CD4-positive, alpha-beta T cell (primary cell): ENCODE measurements at regions of chr2 and their contacts with region 1.

Region 1: DNA sequence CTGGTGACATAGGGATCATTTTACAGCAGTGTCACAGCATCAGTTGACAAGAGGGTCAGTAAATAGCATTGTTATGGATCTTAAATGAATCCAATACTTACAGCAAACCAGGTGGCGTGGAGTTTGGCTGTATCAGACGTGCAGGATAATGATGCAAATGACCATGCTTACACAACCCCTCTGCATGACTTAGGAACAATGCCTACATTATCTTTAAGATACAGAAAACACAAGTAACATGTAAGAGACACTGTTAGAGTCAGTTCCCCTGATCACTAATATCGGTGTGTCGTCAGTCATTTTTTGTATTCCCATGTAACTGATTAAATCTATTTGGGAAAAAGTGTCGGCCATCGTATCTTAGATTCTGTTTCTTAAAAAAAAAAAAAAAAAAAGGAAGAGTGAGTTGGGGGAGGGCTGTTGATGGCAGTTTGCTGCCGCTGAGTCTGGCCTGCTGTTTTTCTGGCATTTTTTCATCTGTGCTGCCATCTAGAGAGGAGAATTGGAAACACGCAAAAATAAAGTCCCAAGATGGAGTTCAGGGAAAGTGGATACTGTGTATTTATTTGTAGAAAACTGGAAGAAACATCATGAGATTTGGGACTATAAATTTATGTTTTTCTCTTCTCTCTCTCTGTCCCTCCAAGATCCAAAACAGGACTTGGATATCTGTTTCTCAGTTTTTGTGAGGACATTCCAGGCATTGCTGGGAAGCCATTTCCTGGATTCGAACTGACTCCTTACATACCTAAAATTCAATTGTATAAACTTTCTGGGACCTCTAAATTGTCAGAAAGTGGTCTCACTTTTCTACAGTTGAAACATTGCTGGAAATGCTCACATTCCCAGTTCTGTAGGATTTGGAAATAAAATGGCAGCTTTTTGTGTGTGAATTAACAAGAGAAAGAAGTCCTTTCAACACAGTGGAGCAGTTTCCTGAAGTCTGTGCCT is 60.3 kb upstream of the AGPS start:
- DNase-seq: peak in 12 of 14 experiments; percentile 9 to 81 (median 22)
- ATAC-seq: peak; percentile 88
- H3K4me3 ChIP-seq: no peak overlapping the region
- H3K4me3 Mint-ChIP-seq: peak overlapping the region; percentile 1
- H3K27ac ChIP-seq: no peak overlapping the region
- H3K27ac Mint-ChIP-seq: no peak overlapping the region
- H3K4me1 ChIP-seq: peaks cover 7% of the 10 kb centered on the region
- H3K4me1 Mint-ChIP-seq: peaks cover 10% of the 10 kb centered on the region
- H3K27me3 ChIP-seq: no peaks in the 10 kb centered on the region
- H3K27me3 Mint-ChIP-seq: no peaks in the 10 kb centered on the region
- CTCF ChIP-seq: peak; percentile 72

Region 2: DNA sequence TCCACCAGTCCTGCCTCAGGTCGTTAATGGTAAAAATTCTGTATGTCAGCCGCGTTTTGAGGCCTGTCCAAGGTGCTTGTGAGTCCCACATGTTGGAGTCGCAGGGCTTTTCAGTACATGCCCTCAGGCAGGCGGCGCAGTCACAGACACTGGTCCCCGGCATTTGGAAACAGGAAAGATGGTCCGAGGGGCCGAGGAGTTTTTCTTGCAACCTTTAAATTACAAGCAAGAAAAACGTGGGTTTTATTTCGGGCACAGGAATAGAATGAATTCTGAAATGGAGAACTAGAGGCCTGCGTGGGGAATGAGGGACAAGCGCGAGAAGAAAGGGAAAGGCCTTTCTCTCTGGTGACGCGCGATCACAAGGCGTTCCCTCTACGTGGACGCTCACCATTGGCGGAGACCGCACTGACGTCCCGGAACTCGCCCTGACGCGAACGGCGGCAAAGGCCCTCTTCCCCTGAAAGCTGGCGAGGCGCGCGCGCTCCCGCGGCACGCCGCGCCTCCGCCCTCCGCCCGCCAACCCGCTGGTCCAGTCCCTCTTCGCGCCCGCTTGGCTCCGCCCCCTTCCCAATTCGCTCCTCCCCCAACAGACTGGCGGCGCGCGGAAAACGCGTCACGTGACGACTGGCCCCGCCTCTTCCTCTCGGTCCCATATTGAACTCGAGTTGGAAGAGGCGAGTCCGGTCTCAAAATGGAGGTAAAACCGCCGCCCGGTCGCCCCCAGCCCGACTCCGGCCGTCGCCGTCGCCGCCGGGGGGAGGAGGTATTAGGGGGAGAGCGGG is 120.0 kb before region 1 on chr2 and contains the start of gene HNRNPA3:
- CTCF ChIA-PET with region 1: no interaction called
- POLR2A ChIA-PET with region 1: no interaction called
- intact Hi-C with region 1: loop called in 1 of 2 experiments (anchors 5 kb)
- DNase-seq: peak; percentile 99 to 100 (median 100)
- ATAC-seq: peak; percentile 81
- H3K4me3 ChIP-seq: peak within 1 kb of the TSS; percentile 86
- H3K4me3 Mint-ChIP-seq: peak within 1 kb of the TSS; percentile 88
- H3K27ac ChIP-seq: peak within 1 kb of the TSS; percentile 98 to 100
- H3K27ac Mint-ChIP-seq: peak within 1 kb of the TSS; percentile 99
- H3K4me1 ChIP-seq: peaks cover 37% of the 10 kb centered on the region
- H3K4me1 Mint-ChIP-seq: peaks cover 61% of the 10 kb centered on the region
- H3K27me3 ChIP-seq: no peaks in the 10 kb centered on the region
- H3K27me3 Mint-ChIP-seq: no peaks in the 10 kb centered on the region
- CTCF ChIP-seq: peak; percentile 33
- total RNA-seq, gene HNRNPA3: 162 to 167 TPM

Region 3: GRCh38 chr2:177273408-177273807 is 58.9 kb before region 1 on chr2:
- CTCF ChIA-PET with region 1: no interaction called
- POLR2A ChIA-PET with region 1: no interaction called
- intact Hi-C with region 1: no loop called
- DNase-seq: no peak
- ATAC-seq: no peak
- H3K4me3 ChIP-seq: no peak overlapping the region
- H3K4me3 Mint-ChIP-seq: no peak overlapping the region
- H3K27ac ChIP-seq: no peak overlapping the region
- H3K27ac Mint-ChIP-seq: no peak overlapping the region
- H3K4me1 ChIP-seq: no peaks in the 10 kb centered on the region
- H3K4me1 Mint-ChIP-seq: no peaks in the 10 kb centered on the region
- H3K27me3 ChIP-seq: no peaks in the 10 kb centered on the region
- H3K27me3 Mint-ChIP-seq: no peaks in the 10 kb centered on the region
- CTCF ChIP-seq: no peak

Region 4: DNA sequence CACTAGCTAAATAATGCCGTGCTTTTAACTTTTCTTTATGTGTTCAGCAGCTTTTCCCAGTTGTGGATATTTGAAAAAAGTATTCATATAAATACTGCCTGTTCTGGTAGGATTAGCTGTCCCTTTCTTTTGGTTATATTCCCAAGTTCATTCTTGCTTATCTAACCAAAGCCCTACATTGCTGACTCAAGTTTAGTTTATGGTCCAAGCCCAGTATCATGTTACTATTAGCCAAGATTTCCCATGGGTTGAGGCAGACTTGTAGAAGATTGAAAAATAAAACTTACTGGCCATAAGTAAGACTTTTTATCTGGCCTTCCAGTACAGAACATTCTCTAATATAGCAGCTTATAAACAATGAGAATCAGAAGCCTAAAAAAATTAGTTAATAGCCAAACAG is 18.1 kb before region 1 on chr2:
- CTCF ChIA-PET with region 1: interaction called, 4 read pairs
- POLR2A ChIA-PET with region 1: interaction called, 14 read pairs
- intact Hi-C with region 1: no loop called
- DNase-seq: no peak
- ATAC-seq: no peak
- H3K4me3 ChIP-seq: no peak overlapping the region
- H3K4me3 Mint-ChIP-seq: no peak overlapping the region
- H3K27ac ChIP-seq: no peak overlapping the region
- H3K27ac Mint-ChIP-seq: peak overlapping the region; percentile 90
- H3K4me1 ChIP-seq: peaks cover 19% of the 10 kb centered on the region
- H3K4me1 Mint-ChIP-seq: peaks cover 38% of the 10 kb centered on the region
- H3K27me3 ChIP-seq: no peaks in the 10 kb centered on the region
- H3K27me3 Mint-ChIP-seq: no peaks in the 10 kb centered on the region
- CTCF ChIP-seq: no peak

Region 5: GRCh38 chr2:177552422-177553175 is 220.3 kb after region 1 on chr2:
- CTCF ChIA-PET with region 1: no interaction called
- POLR2A ChIA-PET with region 1: no interaction called
- intact Hi-C with region 1: loop called in 1 of 2 experiments (anchors 10 kb)
- DNase-seq: peak; percentile 80 to 97 (median 88)
- ATAC-seq: peak; percentile 91
- H3K4me3 ChIP-seq: peak overlapping the region; percentile 71
- H3K4me3 Mint-ChIP-seq: peak overlapping the region; percentile 99
- H3K27ac ChIP-seq: peak overlapping the region; percentile 93 to 99
- H3K27ac Mint-ChIP-seq: peak overlapping the region; percentile 98
- H3K4me1 ChIP-seq: peaks cover 13% of the 10 kb centered on the region
- H3K4me1 Mint-ChIP-seq: peaks cover 17% of the 10 kb centered on the region
- H3K27me3 ChIP-seq: no peaks in the 10 kb centered on the region
- H3K27me3 Mint-ChIP-seq: peaks cover 3% of the 10 kb centered on the region
- CTCF ChIP-seq: no peak

Region 6: DNA sequence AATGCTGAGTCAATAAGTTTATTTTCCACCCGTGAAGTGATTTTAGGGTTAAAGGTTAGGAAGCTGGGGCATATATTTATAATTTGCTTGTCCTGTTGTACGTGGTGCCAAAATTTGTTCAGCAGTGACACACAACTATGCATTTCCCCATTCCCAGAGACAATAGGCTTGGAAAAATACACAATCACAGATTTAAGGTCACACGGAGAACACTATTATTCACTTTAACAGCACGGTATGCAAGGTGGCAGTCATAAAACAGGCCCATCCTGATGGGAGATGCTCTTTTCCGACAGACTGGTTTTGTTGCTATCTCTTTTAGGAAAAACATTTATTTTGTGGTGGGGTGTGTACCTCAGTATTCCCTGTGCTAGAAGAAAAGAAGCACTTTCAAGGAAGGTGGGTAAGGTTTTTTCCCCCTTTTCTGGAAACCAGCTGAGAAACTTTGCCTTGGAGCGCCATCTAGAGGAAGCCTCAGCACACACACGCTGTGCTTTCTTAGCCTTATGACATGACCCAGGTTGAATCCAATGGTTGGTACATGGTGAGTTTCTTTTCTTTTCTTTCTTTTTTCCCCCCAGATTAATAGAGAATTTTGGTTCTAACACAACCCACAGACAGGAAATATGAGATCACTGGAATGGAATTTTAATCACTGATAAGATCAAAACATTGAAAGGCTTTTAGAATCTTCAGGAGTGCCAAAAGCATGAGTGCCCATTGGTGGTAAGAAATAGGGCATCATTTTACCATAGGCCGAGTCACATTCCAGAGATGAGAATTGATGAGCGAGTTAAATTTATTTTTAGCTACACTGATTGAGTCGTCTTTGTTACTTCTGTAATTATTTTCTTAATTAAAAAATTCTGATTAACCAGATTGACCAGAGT is 392.3 kb after region 1 on chr2:
- CTCF ChIA-PET with region 1: no interaction called
- POLR2A ChIA-PET with region 1: no interaction called
- intact Hi-C with region 1: loop called (anchors 2 to 10 kb)
- DNase-seq: peak; percentile 3 to 60 (median 11)
- ATAC-seq: no peak
- H3K4me3 ChIP-seq: no peak overlapping the region
- H3K4me3 Mint-ChIP-seq: no peak overlapping the region
- H3K27ac ChIP-seq: no peak overlapping the region
- H3K27ac Mint-ChIP-seq: no peak overlapping the region
- H3K4me1 ChIP-seq: no peaks in the 10 kb centered on the region
- H3K4me1 Mint-ChIP-seq: no peaks in the 10 kb centered on the region
- H3K27me3 ChIP-seq: peaks cover 5 to 7% of the 10 kb centered on the region in 2 experiments
- H3K27me3 Mint-ChIP-seq: peaks cover 37% of the 10 kb centered on the region
- CTCF ChIP-seq: peak; percentile 69

Region 7: GRCh38 chr2:178119179-178119922 is 787.0 kb after region 1 on chr2:
- CTCF ChIA-PET with region 1: no interaction called
- POLR2A ChIA-PET with region 1: no interaction called
- intact Hi-C with region 1: no loop called
- DNase-seq: no peak
- ATAC-seq: no peak
- H3K4me3 ChIP-seq: no peak overlapping the region
- H3K4me3 Mint-ChIP-seq: no peak overlapping the region
- H3K27ac ChIP-seq: no peak overlapping the region
- H3K27ac Mint-ChIP-seq: no peak overlapping the region
- H3K4me1 ChIP-seq: no peaks in the 10 kb centered on the region
- H3K4me1 Mint-ChIP-seq: peaks cover 18% of the 10 kb centered on the region
- H3K27me3 ChIP-seq: no peaks in the 10 kb centered on the region
- H3K27me3 Mint-ChIP-seq: no peaks in the 10 kb centered on the region
- CTCF ChIP-seq: no peak